ENCODE measurements at regions of chr15 and their contacts with region 1.

Region 1: DNA sequence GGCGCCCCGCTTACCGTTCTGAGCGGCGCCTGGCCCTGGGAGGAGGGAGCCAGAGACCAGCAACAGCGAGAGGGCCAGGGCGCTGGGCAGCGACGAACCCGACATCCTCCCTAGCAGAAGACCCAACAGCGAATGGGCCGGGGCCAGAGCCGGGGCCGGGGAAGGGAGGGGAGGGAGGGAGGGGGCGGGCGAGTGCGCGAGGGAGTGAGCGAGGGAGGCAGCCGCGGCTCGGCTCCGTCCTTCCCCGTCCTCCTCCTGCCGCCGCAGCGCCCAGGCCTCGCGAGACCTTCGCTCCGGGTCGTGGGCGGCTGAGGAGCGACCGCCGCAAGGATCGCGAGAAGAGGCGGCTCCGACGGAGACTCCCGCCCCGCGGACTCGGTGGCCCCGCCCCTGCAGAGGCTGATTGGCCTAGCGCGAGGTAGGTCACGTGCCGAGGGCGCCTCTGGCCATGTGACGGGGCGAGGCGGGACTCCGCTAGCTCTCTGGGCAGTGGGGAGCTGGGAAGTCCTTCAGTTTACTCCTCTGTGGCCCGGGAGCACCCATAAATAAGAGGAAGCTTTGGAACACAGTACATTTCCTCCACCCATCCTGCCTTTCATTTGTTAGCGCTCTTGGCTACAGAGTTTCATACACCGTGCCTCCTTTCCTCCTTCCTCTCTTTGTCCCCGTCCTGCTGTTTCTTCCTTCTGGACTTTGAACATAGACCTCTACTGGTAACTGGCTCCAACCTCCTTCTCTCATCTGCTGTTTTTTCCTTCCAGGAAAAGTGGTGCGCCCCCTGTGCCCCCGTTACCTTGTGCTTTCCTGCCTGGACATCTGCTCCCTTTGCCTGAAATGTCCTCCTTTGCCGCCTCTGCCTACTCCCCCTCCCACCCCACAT is at the start of gene NPTN:
- DNase-seq: peak; percentile 96
- ATAC-seq: peak; percentile 90
- H3K4me3 Mint-ChIP-seq: peak within 1 kb of the TSS; percentile 85
- H3K27ac Mint-ChIP-seq: peak within 1 kb of the TSS; percentile 57
- H3K4me1 Mint-ChIP-seq: peaks cover 53% of the 10 kb centered on the region
- H3K27me3 Mint-ChIP-seq: peaks cover under 1% of the 10 kb centered on the region
- CTCF ChIP-seq: no peak
- total RNA-seq, gene NPTN: 36.1 and 39.0 TPM in 2 replicates

Region 2: DNA sequence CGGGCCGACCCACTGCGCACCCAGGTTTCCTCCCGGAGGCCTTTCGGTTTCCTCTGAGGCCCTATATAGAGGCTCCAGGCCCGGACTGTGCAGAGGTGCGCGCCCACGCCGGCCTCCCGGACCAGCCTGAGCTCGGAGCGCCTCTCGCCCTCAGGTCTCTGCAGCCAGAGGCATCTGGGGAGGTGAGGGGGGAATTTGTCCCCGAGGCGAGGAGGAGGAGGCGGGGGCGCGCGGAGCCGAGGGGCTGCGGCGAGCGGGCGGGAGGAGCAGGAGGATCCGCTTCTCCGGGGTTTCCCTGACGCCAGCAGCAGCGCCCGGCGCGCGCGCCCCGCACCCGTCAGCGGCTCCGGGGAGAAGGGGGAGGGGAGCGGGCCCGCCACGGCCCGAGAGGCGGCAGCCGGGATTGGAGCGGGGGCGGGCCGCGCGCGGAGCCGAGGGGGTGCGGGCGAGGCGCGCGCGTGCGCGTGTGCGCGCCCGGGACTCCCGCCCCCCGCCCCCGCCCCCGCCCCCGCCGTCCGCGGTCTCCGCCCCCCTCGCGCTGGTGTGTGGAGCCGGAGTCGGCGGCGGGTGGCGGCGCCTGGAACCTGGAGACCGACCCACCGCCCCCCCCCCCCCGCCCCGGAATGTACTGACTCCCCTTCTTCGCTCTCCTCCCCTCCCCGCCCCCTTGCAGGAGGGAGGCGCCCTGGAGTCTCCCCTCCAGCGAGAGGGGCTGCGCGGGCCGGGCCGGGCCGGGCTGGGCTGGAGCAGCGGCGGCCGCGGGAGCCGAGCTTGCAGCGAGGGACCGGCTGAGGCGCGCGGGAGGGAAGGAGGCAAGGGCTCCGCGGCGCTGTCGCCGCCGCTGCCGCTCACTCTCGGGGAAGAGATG is 581.3 kb before region 1 on chr15 and contains the start of gene NEO1:
- CTCF ChIA-PET with region 1: no interaction called
- POLR2A ChIA-PET with region 1: no interaction called
- intact Hi-C with region 1: loop called (anchors 5 kb)
- DNase-seq: peak; percentile 61
- ATAC-seq: peak; percentile 78
- H3K4me3 Mint-ChIP-seq: peak within 1 kb of the TSS; percentile 81
- H3K27ac Mint-ChIP-seq: peak within 1 kb of the TSS; percentile 15
- H3K4me1 Mint-ChIP-seq: peaks cover 9% of the 10 kb centered on the region
- H3K27me3 Mint-ChIP-seq: peaks cover 25% of the 10 kb centered on the region
- CTCF ChIP-seq: no peak
- total RNA-seq, gene NEO1: 1.0 and 2.3 TPM in 2 replicates

Region 3: DNA sequence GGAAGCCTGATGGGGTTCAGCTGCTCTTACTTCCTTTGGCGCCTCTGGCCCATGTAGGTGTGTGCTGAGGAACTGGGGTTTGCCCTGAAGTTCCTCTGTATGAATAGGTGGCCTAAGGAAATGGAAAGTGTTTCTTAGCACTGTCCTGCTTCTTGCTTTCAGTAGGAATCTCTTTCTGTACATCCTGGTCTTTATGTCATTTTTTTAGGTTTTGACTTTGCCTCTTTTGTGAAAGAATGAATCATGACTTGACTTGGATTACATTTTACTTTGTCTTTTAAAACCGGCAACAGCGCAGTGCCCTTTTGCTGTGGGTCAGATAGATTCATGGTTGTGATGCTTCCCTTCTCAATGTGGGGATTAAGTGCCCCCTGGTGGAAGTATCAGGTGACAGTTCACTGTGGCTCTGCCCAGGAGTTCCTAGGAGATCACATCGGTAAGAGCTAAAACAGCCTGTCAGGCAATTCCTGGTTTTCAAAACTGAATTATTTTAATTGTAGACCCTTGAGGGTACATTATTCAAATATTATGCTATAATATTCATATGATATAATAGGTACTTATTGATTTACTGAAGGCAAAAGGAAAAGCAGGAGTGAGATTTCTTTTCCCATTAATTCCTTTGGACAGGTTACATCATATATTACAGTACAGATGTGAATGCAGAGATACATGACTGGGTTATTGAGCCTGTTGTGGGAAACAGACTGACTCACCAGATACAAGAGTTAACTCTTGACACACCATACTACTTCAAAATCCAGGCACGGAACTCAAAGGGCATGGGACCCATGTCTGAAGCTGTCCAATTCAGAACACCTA is 360.0 kb before region 1 on chr15:
- CTCF ChIA-PET with region 1: interaction called, 5 read pairs
- POLR2A ChIA-PET with region 1: interaction called, 13 read pairs
- intact Hi-C with region 1: no loop called
- DNase-seq: no peak
- ATAC-seq: peak; percentile 60
- H3K4me3 Mint-ChIP-seq: no peak overlapping the region
- H3K27ac Mint-ChIP-seq: no peak overlapping the region
- H3K4me1 Mint-ChIP-seq: peaks cover 4% of the 10 kb centered on the region
- H3K27me3 Mint-ChIP-seq: no peaks in the 10 kb centered on the region
- CTCF ChIP-seq: peak; percentile 19

Region 4: DNA sequence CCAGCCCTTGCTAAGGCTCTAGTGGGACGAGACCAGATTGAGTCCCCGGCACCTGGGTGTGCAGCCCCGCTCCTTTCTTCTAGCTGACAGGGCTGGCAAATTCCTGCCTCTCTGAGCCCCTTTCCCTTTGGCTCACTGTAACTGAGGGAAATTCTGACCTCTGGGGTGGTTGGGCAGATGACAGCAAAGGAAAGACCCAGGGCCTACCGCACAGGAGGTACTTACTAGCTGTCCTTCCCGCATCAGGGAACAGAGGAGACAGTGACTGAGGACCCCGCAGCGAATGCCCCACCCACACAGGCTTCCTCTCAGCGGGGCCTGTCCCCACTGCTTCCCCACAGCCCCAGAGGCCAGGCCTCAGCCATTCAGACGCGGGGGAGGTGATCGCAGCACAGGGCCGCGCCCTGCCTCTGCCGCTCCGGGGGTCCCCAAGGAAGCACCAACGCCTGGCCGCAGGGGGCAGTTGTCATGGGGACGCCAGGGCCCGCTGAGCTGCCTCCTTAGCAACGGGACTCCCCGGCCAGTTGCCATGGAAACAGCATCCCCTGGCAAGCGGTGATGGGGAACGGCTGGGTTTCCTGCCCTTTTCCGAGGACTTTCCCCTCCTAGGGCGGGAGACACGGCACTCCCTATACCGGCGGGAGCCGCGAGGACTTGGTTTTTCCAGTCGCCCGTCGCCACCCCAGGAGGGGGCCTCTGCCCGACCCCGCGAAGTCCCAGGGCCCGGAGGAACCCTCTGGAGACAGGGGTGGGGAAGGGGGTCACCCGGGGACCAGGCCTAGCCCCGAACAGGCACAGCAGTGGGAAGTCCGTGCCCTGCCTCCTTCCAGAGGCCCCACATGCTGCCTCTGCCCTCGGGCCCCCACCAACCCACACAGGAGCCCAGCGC is 314.6 kb before region 1 on chr15:
- CTCF ChIA-PET with region 1: interaction called, 6 read pairs
- POLR2A ChIA-PET with region 1: interaction called, 5 read pairs
- intact Hi-C with region 1: loop called (anchors 1 kb)
- DNase-seq: peak; percentile 62
- ATAC-seq: peak; percentile 94
- H3K4me3 Mint-ChIP-seq: peak overlapping the region; percentile 67
- H3K27ac Mint-ChIP-seq: peak overlapping the region; percentile 63
- H3K4me1 Mint-ChIP-seq: peaks cover 19% of the 10 kb centered on the region
- H3K27me3 Mint-ChIP-seq: peaks cover 3% of the 10 kb centered on the region
- CTCF ChIP-seq: no peak

Region 5: GRCh38 chr15:73357999-73358665 is 275.2 kb before region 1 on chr15:
- CTCF ChIA-PET with region 1: no interaction called
- POLR2A ChIA-PET with region 1: no interaction called
- intact Hi-C with region 1: no loop called
- DNase-seq: no peak
- ATAC-seq: no peak
- H3K4me3 Mint-ChIP-seq: no peak overlapping the region
- H3K27ac Mint-ChIP-seq: no peak overlapping the region
- H3K4me1 Mint-ChIP-seq: no peaks in the 10 kb centered on the region
- H3K27me3 Mint-ChIP-seq: peaks cover 8% of the 10 kb centered on the region
- CTCF ChIP-seq: no peak

Region 6: DNA sequence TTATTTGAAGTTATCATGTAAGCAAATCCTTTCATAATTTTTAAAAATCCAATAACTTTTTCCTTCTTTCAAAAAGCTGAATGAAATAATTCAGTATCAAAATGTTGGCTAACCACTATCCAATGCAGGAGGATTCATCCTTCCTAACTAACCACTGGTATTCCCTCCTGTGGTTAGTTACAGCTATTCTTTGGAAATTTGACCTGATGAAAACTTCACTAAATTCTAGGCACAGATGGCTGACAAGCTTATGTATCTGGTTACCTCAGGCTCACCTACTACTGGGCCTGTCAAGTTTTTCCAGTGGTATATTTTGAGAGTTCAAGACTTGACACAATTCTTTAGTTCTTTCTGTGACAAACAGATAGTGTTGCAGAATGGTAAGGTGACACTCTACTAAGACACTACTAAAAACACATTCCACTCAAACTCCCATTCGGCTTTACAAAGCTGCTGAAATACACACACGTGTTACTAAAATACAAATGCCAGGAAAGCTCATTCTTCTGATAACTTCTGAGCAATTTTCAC is 16.0 kb before region 1 on chr15:
- CTCF ChIA-PET with region 1: interaction called, 16 read pairs
- POLR2A ChIA-PET with region 1: interaction called, 5 read pairs
- intact Hi-C with region 1: no loop called
- DNase-seq: no peak
- ATAC-seq: no peak
- H3K4me3 Mint-ChIP-seq: no peak overlapping the region
- H3K27ac Mint-ChIP-seq: no peak overlapping the region
- H3K4me1 Mint-ChIP-seq: peaks cover 19% of the 10 kb centered on the region
- H3K27me3 Mint-ChIP-seq: no peaks in the 10 kb centered on the region
- CTCF ChIP-seq: no peak

Region 7: GRCh38 chr15:73927476-73928240 is 294.3 kb after region 1 on chr15:
- CTCF ChIA-PET with region 1: no interaction called
- POLR2A ChIA-PET with region 1: no interaction called
- intact Hi-C with region 1: loop called (anchors 10 kb)
- DNase-seq: peak; percentile 70
- ATAC-seq: peak; percentile 91
- H3K4me3 Mint-ChIP-seq: peak overlapping the region; percentile 70
- H3K27ac Mint-ChIP-seq: no peak overlapping the region
- H3K4me1 Mint-ChIP-seq: peaks cover 12% of the 10 kb centered on the region
- H3K27me3 Mint-ChIP-seq: peaks cover 32% of the 10 kb centered on the region
- CTCF ChIP-seq: no peak

Measured in activated B cell treated with CpG ODN at 0.5 μM for 24 hours (primary cell).